H1 (cell line): ENCODE measurements at regions of chr3 and their contacts with region 1.

Region 1: GRCh38 chr3:180912304-180913296 is at the start of gene FXR1:
- DNase-seq: peak; percentile 94 to 96
- H3K4me3 ChIP-seq: peak within 1 kb of the TSS; percentile 91 to 99 (median 97)
- H3K27ac ChIP-seq: peak within 1 kb of the TSS; percentile 99
- H3K4me1 ChIP-seq: peaks cover 0 to 4% (median 1%) of the 10 kb centered on the region in 4 experiments; a peak in 5 of 7 replicates
- H3K27me3 ChIP-seq: no peaks in the 10 kb centered on the region
- CTCF ChIP-seq: peak; percentile 54 to 80 (median 75)
- EP300 ChIP-seq: peak in 1 of 2 experiments; percentile 83; a peak in 1 of 3 replicates
- POLR2A ChIP-seq: peak; percentile 77 to 96
- RAD21 ChIP-seq: peak; percentile 46 to 54
- total RNA-seq, gene FXR1: 264 and 283 TPM in 2 replicates

Region 2: DNA sequence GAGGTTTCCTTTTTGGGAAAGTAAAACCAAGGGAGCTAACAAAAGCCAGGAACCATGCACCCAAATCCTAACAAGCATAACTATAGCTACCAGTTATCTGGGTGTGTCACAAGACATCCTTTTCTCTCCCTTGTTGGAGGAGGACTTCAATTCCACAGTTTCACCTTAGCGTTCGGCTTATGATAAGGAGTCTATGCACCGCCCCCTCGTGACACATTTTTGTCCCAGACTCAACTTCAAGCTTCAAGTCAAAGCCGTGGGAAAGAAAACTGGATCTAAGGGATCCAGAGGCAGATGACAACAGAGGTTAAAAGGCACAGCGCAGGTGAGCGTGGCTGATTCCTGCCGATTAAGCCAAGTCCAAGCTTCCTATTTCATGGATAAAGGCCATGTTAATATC is 14.0 kb before region 1 on chr3:
- CTCF ChIA-PET with region 1: interaction called, 16 read pairs
- POLR2A ChIA-PET with region 1: interaction called, 9 read pairs
- DNase-seq: no peak
- H3K4me3 ChIP-seq: no peak overlapping the region
- H3K27ac ChIP-seq: no peak overlapping the region
- H3K4me1 ChIP-seq: no peaks in the 10 kb centered on the region
- H3K27me3 ChIP-seq: no peaks in the 10 kb centered on the region
- CTCF ChIP-seq: no peak
- EP300 ChIP-seq: no peak
- POLR2A ChIP-seq: no peak
- RAD21 ChIP-seq: no peak

Region 3: GRCh38 chr3:180923561-180923960 is 11.0 kb after region 1 on chr3:
- CTCF ChIA-PET with region 1: interaction called, 4 read pairs
- POLR2A ChIA-PET with region 1: interaction called, 18 read pairs
- DNase-seq: no peak
- H3K4me3 ChIP-seq: no peak overlapping the region
- H3K27ac ChIP-seq: no peak overlapping the region
- H3K4me1 ChIP-seq: peaks cover 0 to 5% (median 4%) of the 10 kb centered on the region in 4 experiments; a peak in 5 of 7 replicates
- H3K27me3 ChIP-seq: no peaks in the 10 kb centered on the region
- CTCF ChIP-seq: no peak
- EP300 ChIP-seq: no peak
- POLR2A ChIP-seq: no peak
- RAD21 ChIP-seq: no peak